ENCODE measurements at regions of chr17 and their contacts with region 1.

Region 1: GRCh38 chr17:30886187-30886586 is 19.9 kb downstream of the TEFM start:
- DNase-seq: no peak
- H3K4me3 ChIP-seq: no peak overlapping the region
- H3K27ac ChIP-seq: no peak overlapping the region
- H3K4me1 ChIP-seq: no peaks in the 10 kb centered on the region
- H3K27me3 ChIP-seq: no peaks in the 10 kb centered on the region
- CTCF ChIP-seq: no peak

Region 2: GRCh38 chr17:30848021-30848420 is 38.2 kb before region 1 on chr17:
- CTCF ChIA-PET with region 1: no interaction called
- POLR2A ChIA-PET with region 1: no interaction called
- intact Hi-C with region 1: no loop called
- DNase-seq: no peak
- H3K4me3 ChIP-seq: no peak overlapping the region
- H3K27ac ChIP-seq: no peak overlapping the region
- H3K4me1 ChIP-seq: no peaks in the 10 kb centered on the region
- H3K27me3 ChIP-seq: no peaks in the 10 kb centered on the region
- CTCF ChIP-seq: no peak

Region 3: DNA sequence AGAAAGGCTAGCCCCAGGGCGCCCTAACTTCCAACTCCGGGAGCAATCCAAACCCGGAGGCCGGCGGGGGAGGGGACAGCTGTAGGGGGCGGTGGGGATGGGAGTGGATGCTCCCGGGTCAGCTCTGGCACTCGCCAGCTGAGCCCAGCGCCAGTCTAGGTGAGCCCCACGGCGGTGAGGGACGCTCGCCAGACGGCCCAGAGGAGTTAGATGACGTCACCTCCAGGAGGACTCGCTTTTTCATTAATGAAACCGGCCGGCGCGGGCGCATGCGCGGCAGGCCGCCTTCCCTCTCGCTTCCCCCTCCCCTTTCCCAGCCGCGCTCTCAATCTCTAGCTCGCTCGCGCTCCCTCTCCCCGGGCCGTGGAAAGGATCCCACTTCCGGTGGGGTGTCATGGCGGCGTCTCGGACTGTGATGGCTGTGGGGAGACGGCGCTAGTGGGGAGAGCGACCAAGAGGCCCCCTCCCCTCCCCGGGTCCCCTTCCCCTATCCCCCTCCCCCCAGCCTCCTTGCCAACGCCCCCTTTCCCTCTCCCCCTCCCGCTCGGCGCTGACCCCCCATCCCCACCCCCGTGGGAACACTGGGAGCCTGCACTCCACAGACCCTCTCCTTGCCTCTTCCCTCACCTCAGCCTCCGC is 208.5 kb after region 1 on chr17 and contains the start of gene NF1:
- CTCF ChIA-PET with region 1: no interaction called
- POLR2A ChIA-PET with region 1: interaction called, 35 read pairs
- intact Hi-C with region 1: no loop called
- DNase-seq: peak; percentile 83 to 94
- H3K4me3 ChIP-seq: peak within 1 kb of the TSS; percentile 98
- H3K27ac ChIP-seq: peak within 1 kb of the TSS; percentile 79
- H3K4me1 ChIP-seq: peaks cover 13% of the 10 kb centered on the region; the same call in 1 of the 2 replicates
- H3K27me3 ChIP-seq: no peaks in the 10 kb centered on the region
- CTCF ChIP-seq: no peak
- total RNA-seq, gene NF1: 61.0 and 64.0 TPM in 2 replicates

Measured in PC-9 (cell line).